Activated CD8-positive, alpha-beta T cell treated with anti-CD3 and anti-CD28 coated beads, Interleukin-2, amount 10 ng/mL, durations not matched to agents 7 days and 5 days (primary cell): ENCODE measurements at regions of chr6 and their contacts with region 1.

Region 1: GRCh38 chr6:35202066-35202546 is 11.7 kb upstream of the SCUBE3 start:
- DNase-seq: no peak
- ATAC-seq: no peak
- H3K4me3 Mint-ChIP-seq: no peak overlapping the region
- H3K27ac Mint-ChIP-seq: no peak overlapping the region
- H3K4me1 Mint-ChIP-seq: no peaks in the 10 kb centered on the region
- H3K27me3 Mint-ChIP-seq: peaks cover 43% of the 10 kb centered on the region

Region 2: GRCh38 chr6:35139908-35140655 is 62.0 kb before region 1 on chr6:
- CTCF ChIA-PET with region 1: interaction called, 77 read pairs
- POLR2A ChIA-PET with region 1: no interaction called
- DNase-seq: peak; percentile 67
- ATAC-seq: peak; percentile 45
- H3K4me3 Mint-ChIP-seq: no peak overlapping the region
- H3K27ac Mint-ChIP-seq: no peak overlapping the region
- H3K4me1 Mint-ChIP-seq: peaks cover 18% of the 10 kb centered on the region
- H3K27me3 Mint-ChIP-seq: peaks cover 26% of the 10 kb centered on the region

Region 3: DNA sequence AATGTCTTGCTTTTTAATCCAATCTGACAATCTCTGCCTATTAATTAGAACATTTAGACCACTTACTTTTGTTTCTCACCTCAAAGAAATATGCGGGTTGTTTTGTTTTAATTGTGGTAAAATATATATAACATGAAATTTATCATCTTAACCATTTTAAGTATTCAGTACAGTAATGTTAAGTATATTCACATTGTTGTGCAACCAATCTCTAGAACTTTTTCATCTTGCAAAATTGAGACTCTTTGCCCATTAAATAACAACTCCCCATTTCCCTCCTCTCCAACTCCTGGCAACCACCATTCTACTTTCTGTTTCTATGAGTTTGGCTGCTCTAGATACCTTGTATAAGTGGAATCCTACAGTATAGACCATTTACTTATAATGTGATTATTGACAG is 47.2 kb before region 1 on chr6:
- CTCF ChIA-PET with region 1: interaction called, 12 read pairs
- POLR2A ChIA-PET with region 1: no interaction called
- DNase-seq: no peak
- ATAC-seq: no peak
- H3K4me3 Mint-ChIP-seq: no peak overlapping the region
- H3K27ac Mint-ChIP-seq: no peak overlapping the region
- H3K4me1 Mint-ChIP-seq: no peaks in the 10 kb centered on the region
- H3K27me3 Mint-ChIP-seq: peaks cover 24% of the 10 kb centered on the region

Region 4: DNA sequence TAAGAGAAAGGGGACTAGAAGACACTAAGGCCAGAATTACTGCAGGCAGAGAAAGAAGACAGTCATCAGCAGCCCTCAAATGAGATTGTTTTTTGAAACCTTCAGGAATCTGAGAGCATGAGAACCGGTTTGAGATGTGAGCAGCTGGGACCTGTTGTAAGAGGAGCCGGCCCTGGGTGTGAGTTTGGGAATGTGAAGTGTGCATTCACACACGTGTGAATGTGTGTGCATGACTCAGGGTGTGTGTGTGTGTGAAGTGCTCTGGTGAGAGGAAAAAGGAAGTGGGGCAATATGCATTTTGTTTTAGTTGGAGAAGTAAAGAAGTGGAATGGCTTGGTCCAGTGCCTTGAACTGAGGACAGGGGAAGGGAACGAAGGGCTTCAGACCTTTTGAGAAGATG is 15.9 kb after region 1 on chr6:
- CTCF ChIA-PET with region 1: interaction called, 19 read pairs
- POLR2A ChIA-PET with region 1: no interaction called
- DNase-seq: no peak
- ATAC-seq: no peak
- H3K4me3 Mint-ChIP-seq: no peak overlapping the region
- H3K27ac Mint-ChIP-seq: no peak overlapping the region
- H3K4me1 Mint-ChIP-seq: peaks cover 4% of the 10 kb centered on the region
- H3K27me3 Mint-ChIP-seq: peaks cover 42% of the 10 kb centered on the region

Region 5: DNA sequence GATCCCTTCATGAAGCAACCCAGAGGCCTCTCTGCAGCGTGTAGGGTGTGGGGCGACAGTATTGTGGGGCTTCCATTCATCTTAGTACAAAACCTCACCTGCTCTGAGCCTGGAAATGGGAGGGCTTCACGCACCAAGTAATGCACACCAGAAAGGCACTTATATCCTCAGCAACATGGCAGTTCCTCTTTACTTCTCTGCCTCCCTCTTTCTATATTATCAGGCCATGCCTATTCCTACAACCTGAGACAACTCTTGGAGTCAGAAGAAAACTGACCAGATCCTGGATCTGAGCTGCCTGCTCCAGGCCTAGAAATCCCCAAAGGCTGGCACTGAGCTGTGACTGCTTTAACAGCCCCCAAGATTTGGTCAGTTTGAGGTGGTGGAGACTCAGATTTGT is 49.8 kb after region 1 on chr6:
- CTCF ChIA-PET with region 1: no interaction called
- POLR2A ChIA-PET with region 1: no interaction called
- DNase-seq: no peak
- ATAC-seq: no peak
- H3K4me3 Mint-ChIP-seq: no peak overlapping the region
- H3K27ac Mint-ChIP-seq: no peak overlapping the region
- H3K4me1 Mint-ChIP-seq: peaks cover 18% of the 10 kb centered on the region
- H3K27me3 Mint-ChIP-seq: no peaks in the 10 kb centered on the region